HAP-1 (cell line): ENCODE measurements at regions of chr4 and their contacts with region 1.

Region 1: DNA sequence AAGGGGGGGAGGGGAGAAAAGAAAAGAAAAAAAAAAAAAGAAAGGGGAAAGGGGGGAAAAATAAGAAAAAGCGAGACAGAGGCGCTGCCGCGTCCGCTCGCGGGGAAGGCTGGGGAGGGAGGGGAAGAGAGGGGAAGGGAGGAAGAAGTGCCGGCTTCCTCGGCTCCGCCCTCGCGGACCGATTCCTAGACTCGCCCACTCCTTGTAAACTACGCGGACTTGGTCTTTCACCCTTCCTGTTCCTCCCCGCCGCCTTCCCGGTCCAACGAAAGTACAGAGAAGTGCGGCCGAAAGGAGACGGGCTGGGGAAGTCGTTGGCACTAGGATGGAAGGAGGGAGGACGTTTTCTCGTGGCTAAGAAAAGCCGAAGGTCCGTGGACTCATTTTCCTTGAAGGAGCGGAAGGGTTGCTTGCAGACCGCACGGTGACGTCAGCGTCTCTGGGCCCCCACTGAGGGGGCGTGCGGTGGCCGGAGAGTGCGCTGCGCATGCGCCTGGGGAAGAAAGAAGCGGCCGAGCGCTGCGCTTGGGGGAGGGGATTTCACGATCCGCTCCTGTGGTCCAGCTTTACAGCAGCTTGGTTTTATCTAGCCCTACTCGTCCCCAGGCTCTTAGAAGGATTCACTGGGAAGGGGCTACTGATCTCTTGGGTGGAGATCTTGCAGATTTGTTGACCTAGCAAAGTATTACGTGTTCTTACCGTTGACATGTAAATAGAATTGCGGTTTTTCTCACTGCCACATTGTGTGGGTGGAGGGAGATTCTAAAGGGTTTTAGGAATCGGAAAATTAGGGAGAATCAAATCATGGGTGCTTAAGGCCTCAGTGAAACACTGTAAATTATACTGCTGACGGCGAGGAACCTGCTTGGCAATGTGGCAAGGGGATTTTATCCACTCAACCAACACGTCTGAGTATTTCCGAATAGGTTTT is at the start of gene CCNI:
- DNase-seq: peak; percentile 89 to 97
- H3K4me3 ChIP-seq: peak within 1 kb of the TSS; percentile 96
- H3K4me1 ChIP-seq: peaks cover 24% of the 10 kb centered on the region
- H3K27me3 ChIP-seq: no peaks in the 10 kb centered on the region

Region 2: DNA sequence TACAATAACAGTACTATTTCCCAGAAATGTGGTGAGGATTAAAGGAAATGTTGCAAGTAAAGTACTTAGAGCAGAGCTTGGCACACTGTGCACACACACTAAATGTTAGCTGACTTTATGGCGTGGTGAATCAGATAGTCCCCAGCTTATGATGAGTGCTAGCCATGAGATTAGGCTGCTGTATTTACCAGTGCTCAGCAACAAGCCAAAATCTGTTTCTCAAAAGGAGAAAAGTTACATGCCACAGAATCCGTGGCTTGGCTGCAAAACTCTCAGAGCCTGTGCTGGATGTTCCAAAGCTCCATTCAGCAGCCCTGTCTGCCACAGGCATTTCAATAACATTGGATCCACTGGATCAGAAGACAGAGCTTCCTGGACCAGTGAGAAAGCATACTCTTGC is 782.4 kb before region 1 on chr4:
- in situ Hi-C with region 1: no loop called
- DNase-seq: no peak
- H3K4me3 ChIP-seq: no peak overlapping the region
- H3K4me1 ChIP-seq: no peaks in the 10 kb centered on the region
- H3K27me3 ChIP-seq: no peaks in the 10 kb centered on the region

Region 3: DNA sequence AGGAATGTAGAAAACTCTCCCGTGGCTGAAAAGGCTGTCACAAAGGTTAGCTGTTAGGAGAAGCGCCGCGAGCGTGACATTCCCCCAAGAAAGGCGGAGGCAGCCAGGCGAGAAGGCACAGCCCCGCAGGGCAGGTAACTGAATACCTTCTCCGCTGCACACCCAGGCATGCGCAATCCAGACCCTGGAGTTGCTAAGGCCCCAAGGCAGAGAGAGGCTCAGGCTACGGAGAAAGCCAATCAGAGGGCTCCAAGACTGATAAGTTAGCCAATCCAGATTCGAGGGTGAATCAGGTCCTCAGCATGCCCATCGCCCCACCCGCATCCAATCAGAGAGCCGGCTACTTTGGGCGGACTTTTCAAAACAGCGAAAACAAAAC is 80.4 kb after region 1 on chr4:
- in situ Hi-C with region 1: loop called (anchors 10 kb)
- DNase-seq: peak; percentile 97 to 99
- H3K4me3 ChIP-seq: peak overlapping the region; percentile 84
- H3K4me1 ChIP-seq: peaks cover 22% of the 10 kb centered on the region
- H3K27me3 ChIP-seq: no peaks in the 10 kb centered on the region